Activated naive CD4-positive, alpha-beta T cell treated with anti-CD3 and anti-CD28 coated beads for 36 hours (primary cell): ENCODE measurements at regions of chr7 and their contacts with region 1.

Region 1: DNA sequence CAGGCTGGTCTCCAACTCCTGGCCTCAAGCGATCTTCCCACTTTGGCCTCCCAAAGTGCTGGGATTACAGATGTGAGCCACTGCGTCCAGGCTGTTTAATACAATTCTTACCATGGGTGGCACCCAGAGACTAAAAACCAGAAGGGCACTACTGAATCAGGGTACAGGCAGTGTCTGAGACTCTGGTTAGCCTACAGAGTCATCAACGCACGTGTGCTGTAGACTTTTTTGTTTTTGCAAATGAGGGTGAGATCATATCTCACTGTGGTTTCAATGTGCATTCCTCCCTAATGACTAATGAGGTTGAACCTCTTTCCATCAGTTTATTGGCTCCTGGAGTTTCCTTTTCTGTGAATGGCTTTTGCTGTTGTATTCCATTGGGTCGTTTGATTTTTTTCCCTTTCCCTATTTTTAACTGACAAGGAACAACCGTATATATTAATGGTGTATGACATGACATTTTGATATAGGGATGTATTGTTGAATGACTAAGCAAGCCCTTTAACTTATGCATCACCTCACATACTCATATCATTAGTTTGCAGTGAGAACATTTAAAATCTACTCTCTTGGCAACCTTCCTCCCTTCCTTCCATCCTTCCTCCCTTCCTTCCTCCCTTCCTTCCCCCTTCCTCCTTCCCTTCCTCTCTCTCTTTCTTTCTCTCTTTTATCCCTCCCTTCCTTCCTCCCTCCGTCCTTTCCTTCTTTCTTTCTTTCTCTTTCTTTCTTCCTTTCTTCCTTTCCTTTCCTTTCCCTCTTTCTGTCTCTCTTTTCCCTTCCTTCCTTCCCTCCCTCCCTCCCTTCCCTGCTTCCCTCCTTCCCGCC is 9.3 kb upstream of the METTL27 start:
- DNase-seq: peak; percentile 60
- H3K4me3 Mint-ChIP-seq: no peak overlapping the region
- H3K27ac Mint-ChIP-seq: peak overlapping the region; percentile 53
- H3K4me1 Mint-ChIP-seq: peaks cover 30% of the 10 kb centered on the region
- H3K27me3 Mint-ChIP-seq: peaks cover 14% of the 10 kb centered on the region

Region 2: GRCh38 chr7:73786588-73786987 is 65.0 kb before region 1 on chr7:
- CTCF ChIA-PET with region 1: no interaction called
- intact Hi-C with region 1: no loop called
- DNase-seq: no peak
- H3K4me3 Mint-ChIP-seq: no peak overlapping the region
- H3K27ac Mint-ChIP-seq: no peak overlapping the region
- H3K4me1 Mint-ChIP-seq: no peaks in the 10 kb centered on the region
- H3K27me3 Mint-ChIP-seq: no peaks in the 10 kb centered on the region

Region 3: GRCh38 chr7:73811760-73812168 is 39.9 kb before region 1 on chr7:
- CTCF ChIA-PET with region 1: interaction called, 42 read pairs
- intact Hi-C with region 1: loop called (anchors 1 kb)
- DNase-seq: peak; percentile 73
- H3K4me3 Mint-ChIP-seq: no peak overlapping the region
- H3K27ac Mint-ChIP-seq: no peak overlapping the region
- H3K4me1 Mint-ChIP-seq: no peaks in the 10 kb centered on the region
- H3K27me3 Mint-ChIP-seq: peaks cover 8% of the 10 kb centered on the region

Region 4: GRCh38 chr7:73828107-73828803 is 23.4 kb before region 1 on chr7:
- CTCF ChIA-PET with region 1: interaction called, 10 read pairs
- intact Hi-C with region 1: loop called (anchors 1 kb)
- DNase-seq: peak; percentile 66
- H3K4me3 Mint-ChIP-seq: no peak overlapping the region
- H3K27ac Mint-ChIP-seq: no peak overlapping the region
- H3K4me1 Mint-ChIP-seq: peaks cover 25% of the 10 kb centered on the region
- H3K27me3 Mint-ChIP-seq: peaks cover 5% of the 10 kb centered on the region